Vagina (tissue), 2 donors: ENCODE measurements at regions of chr2 and their contacts with region 1.

Region 1: GRCh38 chr2:60275958-60276357 is 277.5 kb downstream of the BCL11A start:
- DNase-seq: no peak
- H3K4me3 ChIP-seq: no peak overlapping the region
- H3K27ac ChIP-seq: no peak overlapping the region
- H3K4me1 ChIP-seq: no peaks in the 10 kb centered on the region
- H3K27me3 ChIP-seq: no peaks in the 10 kb centered on the region
- CTCF ChIP-seq: no peak
- POLR2A ChIP-seq: no peak

Region 2: DNA sequence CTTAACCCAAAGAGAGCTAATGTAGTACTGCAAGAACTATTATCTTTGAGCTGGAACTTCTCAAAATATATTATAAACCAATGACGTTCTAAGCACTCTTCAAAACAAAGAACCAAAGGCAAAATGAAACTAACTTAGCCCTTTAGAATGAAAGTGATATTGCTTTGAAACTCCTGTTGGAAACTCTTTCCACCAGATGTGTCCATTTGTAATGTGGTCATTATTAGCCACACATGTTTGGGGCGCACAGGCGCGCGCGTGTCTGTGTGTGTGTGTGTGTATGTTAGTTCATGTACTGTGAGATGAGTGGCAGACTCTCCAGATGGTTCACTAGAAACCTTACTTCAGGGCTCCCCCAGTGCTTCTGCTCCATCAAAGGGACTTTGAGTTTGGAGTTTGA is 45.9 kb before region 1 on chr2:
- intact Hi-C with region 1: loop called (anchors 1 kb)
- DNase-seq: no peak
- H3K4me3 ChIP-seq: no peak overlapping the region
- H3K27ac ChIP-seq: no peak overlapping the region
- H3K4me1 ChIP-seq: no peaks in the 10 kb centered on the region
- H3K27me3 ChIP-seq: no peaks in the 10 kb centered on the region
- CTCF ChIP-seq: no peak
- POLR2A ChIP-seq: no peak